A673 (cell line): ENCODE measurements at regions of chr10 and their contacts with region 1.

Region 1: DNA sequence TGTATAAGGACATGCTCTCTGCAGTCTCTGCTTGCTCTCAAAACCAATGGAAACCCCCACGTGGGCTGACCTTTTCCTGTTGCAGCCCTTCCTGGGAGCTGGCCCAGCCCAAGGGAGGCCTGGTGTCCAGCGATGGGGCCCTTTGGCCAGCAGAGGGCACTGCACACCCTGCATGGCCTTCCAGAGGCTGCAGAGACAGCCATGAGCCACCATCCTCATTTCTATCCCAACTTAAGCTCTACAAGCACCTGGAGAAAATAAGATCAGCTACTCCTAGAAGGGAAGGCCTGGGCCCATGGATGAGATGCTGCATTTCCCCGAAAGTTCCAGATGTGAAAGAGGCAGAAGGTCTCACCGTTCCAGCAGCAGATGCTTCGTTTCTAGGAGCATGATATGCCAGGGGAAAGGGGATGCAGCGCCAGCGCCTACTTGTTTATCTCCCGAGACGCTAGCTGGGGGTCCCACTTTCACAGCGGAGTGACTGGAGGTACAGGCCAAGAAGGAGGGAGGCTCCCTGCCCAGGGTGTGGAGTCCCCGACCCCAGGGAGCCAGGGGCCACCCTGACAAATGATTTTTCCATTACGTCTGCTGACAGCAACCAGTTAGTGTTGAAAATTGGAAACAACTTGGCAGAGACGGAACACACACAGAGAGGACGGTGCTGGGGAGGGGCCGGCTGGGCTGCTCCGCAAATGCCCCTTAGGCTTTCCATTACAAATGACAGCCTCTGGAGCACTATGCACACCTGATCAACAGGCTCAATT is 106.4 kb downstream of the ZRANB1 start:
- DNase-seq: peak; percentile 84
- H3K4me3 ChIP-seq: no peak overlapping the region
- H3K27ac ChIP-seq: no peak overlapping the region
- H3K4me1 ChIP-seq: peaks cover 49% of the 10 kb centered on the region
- H3K27me3 ChIP-seq: no peaks in the 10 kb centered on the region
- CTCF ChIP-seq: peak; percentile 92

Region 2: GRCh38 chr10:124085680-124086079 is 962.6 kb before region 1 on chr10:
- CTCF ChIA-PET with region 1: interaction called, 10 read pairs
- POLR2A ChIA-PET with region 1: no interaction called
- intact Hi-C with region 1: no loop called
- DNase-seq: no peak
- H3K4me3 ChIP-seq: no peak overlapping the region
- H3K27ac ChIP-seq: no peak overlapping the region
- H3K4me1 ChIP-seq: no peaks in the 10 kb centered on the region
- H3K27me3 ChIP-seq: peaks cover 8% of the 10 kb centered on the region
- CTCF ChIP-seq: no peak

Region 3: GRCh38 chr10:125060826-125061556 is 12.7 kb after region 1 on chr10:
- CTCF ChIA-PET with region 1: interaction called, 15 read pairs
- POLR2A ChIA-PET with region 1: interaction called, 3 read pairs
- intact Hi-C with region 1: no loop called
- DNase-seq: peak; percentile 84
- H3K4me3 ChIP-seq: no peak overlapping the region
- H3K27ac ChIP-seq: peak overlapping the region; percentile 48
- H3K4me1 ChIP-seq: peaks cover 63% of the 10 kb centered on the region
- H3K27me3 ChIP-seq: no peaks in the 10 kb centered on the region
- CTCF ChIP-seq: peak; percentile 91

Region 4: DNA sequence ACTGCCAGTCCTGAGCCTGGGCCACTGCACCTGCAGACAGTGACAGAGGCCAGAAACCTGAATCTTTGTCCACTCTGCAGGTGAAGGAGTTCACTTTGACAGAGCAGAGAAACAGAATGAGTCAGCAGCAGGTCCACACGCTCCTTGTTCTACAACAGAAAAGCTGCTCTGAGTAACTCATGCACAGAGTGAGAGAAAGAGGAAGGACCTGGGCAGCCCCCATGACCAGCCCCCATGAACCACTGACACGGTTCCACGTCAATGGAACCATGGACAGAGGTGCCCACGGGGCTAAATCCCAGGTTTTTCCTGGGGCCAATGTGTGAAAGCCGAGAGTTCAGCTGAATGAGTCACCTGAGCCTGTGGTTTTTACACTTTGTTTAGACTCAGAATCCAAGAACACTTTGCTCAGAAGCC is 152.8 kb after region 1 on chr10:
- CTCF ChIA-PET with region 1: no interaction called
- POLR2A ChIA-PET with region 1: no interaction called
- intact Hi-C with region 1: no loop called
- DNase-seq: no peak
- H3K4me3 ChIP-seq: no peak overlapping the region
- H3K27ac ChIP-seq: no peak overlapping the region
- H3K4me1 ChIP-seq: no peaks in the 10 kb centered on the region
- H3K27me3 ChIP-seq: peaks cover 5% of the 10 kb centered on the region
- CTCF ChIP-seq: no peak

Region 5: DNA sequence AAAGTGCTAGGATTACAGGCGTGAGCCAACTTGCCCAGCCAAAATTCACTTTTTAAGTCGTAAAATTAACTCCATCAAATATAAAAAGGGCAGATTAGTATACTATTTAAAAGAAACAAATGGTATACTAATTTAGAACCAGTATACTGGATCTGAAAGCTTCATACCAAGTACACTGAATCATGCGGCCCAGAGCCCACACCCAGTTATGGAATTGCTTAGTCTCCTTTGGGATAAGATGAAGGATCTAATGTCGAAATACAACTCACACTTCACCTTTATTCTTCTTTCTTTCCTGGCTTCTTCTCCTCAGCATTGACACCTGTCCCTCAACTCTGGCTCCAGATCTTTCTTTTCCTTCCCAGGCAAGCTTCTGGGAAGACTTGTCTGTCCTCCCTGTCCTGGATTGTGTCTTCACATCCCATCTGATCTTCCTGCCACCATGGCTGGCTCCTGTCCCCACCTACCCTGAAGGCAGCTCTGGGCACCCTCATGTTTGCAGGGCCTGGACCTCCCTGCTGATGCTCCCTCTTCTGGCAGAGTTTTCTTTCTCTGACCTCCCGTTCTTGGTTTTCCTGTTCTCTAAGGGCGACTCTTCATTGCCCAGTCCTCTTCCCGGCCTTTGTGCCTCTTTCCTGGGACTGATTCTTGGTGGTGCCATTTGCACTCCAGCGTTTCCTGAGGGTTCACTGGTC is 169.8 kb after region 1 on chr10:
- CTCF ChIA-PET with region 1: no interaction called
- POLR2A ChIA-PET with region 1: no interaction called
- intact Hi-C with region 1: no loop called
- DNase-seq: no peak
- H3K4me3 ChIP-seq: no peak overlapping the region
- H3K27ac ChIP-seq: no peak overlapping the region
- H3K4me1 ChIP-seq: no peaks in the 10 kb centered on the region
- H3K27me3 ChIP-seq: no peaks in the 10 kb centered on the region
- CTCF ChIP-seq: no peak

Region 6: GRCh38 chr10:125343118-125343925 is 295.0 kb after region 1 on chr10:
- CTCF ChIA-PET with region 1: interaction called, 3 read pairs
- POLR2A ChIA-PET with region 1: no interaction called
- intact Hi-C with region 1: loop called (anchors 5 kb)
- DNase-seq: peak; percentile 31
- H3K4me3 ChIP-seq: no peak overlapping the region
- H3K27ac ChIP-seq: no peak overlapping the region
- H3K4me1 ChIP-seq: no peaks in the 10 kb centered on the region
- H3K27me3 ChIP-seq: no peaks in the 10 kb centered on the region
- CTCF ChIP-seq: peak; percentile 67

Region 7: DNA sequence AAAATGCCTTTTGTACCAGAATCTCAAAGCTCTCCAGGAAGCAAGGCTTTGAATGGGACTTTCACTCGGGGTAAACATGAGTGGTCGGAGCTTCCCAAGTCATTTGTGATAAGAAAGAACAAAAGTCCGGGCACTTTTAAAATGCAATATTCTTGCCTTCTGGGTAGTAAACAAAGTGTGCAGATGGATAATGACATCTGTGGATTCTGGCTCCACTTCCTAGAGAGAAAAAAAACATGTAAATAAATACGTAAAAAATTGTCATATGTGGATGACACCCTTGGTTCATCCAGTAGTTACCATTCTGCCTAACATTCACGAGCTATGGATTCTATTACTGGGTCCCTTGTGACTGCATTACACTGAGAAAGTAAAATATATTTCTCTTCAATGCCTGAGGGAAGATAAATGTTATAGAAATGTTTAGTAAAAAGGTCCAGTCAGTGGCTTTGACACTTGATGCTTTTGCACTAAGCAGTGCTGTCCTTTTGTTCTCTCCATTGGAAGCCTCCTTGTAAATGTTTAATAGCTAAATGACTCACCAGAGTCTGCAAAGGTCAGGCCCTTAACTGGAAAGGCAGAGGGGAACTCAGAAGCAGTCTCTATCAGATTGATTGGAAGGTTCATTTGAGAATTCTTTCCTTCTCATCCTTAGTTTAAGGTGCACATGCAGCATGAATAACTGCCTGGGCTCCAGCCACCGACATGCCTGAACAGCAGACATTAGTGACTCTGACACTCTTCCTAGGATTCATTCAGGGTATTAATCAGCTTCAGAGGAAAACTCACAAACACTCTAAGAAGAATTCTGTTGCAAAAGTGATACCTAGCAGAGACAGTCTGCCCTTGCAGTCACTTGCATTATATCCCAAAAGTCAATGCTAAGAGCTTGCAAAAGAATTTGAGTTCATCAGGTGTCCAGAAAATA is 659.5 kb after region 1 on chr10:
- CTCF ChIA-PET with region 1: no interaction called
- POLR2A ChIA-PET with region 1: no interaction called
- intact Hi-C with region 1: loop called (anchors 10 kb)
- DNase-seq: no peak
- H3K4me3 ChIP-seq: no peak overlapping the region
- H3K27ac ChIP-seq: no peak overlapping the region
- H3K4me1 ChIP-seq: no peaks in the 10 kb centered on the region
- H3K27me3 ChIP-seq: no peaks in the 10 kb centered on the region
- CTCF ChIP-seq: no peak